IMR-90 (cell line): ENCODE measurements at regions of chr15 and their contacts with region 1.

Region 1: DNA sequence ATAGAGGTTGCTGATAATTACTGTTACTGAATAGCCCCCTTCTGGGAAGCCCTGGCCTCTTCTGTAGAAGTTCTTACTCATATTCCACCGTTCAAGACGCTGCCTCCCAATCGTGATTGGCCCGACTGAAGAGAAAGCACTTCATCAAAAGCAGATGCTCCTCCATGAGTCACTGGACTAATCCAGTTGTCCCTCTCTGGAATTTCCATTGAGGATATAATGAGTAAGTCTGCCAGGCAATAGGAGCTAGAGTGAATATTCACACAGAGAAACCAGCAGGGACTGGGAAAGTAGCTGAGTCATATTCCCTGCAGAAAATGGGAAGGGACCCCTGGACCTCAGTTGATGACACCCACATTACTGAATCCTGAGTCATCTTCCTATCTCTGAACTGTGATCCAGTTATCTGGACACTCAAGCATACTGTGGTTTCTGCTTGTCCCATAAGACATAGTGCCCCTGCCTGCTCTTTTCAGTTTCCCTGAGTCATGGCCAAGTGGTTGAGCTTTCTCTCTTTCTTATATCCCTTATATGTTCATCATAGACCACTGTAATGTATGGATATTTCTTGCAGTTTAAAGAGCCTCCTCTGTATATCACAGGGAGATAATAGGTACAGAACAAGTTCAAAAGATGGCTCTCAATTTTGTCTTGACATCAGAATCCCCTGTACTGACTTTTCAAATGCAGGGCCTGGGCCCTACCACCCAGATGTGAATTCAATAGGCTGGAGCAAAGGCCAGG is 151.2 kb upstream of the CDIN1 start:
- DNase-seq: peak; percentile 100
- ATAC-seq: peak; percentile 92
- H3K4me3 ChIP-seq: no peak overlapping the region
- H3K27ac ChIP-seq: peak overlapping the region; percentile 92
- H3K4me1 ChIP-seq: peaks cover 15% of the 10 kb centered on the region; the same call in 1 of the 2 replicates
- H3K27me3 ChIP-seq: no peaks in the 10 kb centered on the region
- CTCF ChIP-seq: no peak
- POLR2A ChIP-seq: no peak
- RAD21 ChIP-seq: peak; percentile 38; the same call in 1 of the 2 replicates

Region 2: GRCh38 chr15:35115155-35115725 is 1313.0 kb before region 1 on chr15:
- CTCF ChIA-PET with region 1: no interaction called
- POLR2A ChIA-PET with region 1: no interaction called
- dilution Hi-C with region 1: no loop called
- in situ Hi-C with region 1: no loop called
- intact Hi-C with region 1: no loop called
- DNase-seq: peak; percentile 16
- ATAC-seq: no peak
- H3K4me3 ChIP-seq: no peak overlapping the region
- H3K27ac ChIP-seq: no peak overlapping the region
- H3K4me1 ChIP-seq: no peaks in the 10 kb centered on the region
- H3K27me3 ChIP-seq: no peaks in the 10 kb centered on the region
- CTCF ChIP-seq: no peak
- POLR2A ChIP-seq: no peak
- RAD21 ChIP-seq: no peak

Region 3: DNA sequence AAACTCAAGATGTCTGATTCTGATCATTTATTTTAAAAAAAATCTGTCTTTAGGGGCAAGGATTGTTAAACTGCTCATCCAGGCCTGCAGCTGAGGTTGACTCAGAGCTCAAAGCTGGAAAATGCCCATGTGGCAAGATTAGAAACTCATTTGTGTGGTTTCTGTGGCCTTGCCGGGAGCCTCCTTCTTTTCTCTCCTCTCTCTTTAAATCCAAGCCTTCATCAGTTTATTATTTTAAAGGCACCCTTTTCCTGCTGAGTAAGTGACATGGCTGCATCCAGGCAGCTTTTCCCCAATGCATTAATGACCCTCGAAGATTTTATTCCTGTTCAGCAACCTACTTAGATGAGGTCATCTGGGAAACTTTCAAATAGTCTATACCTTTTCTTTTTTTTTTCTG is 70.2 kb before region 1 on chr15:
- CTCF ChIA-PET with region 1: no interaction called
- POLR2A ChIA-PET with region 1: no interaction called
- dilution Hi-C with region 1: no loop called
- in situ Hi-C with region 1: no loop called
- intact Hi-C with region 1: loop called (anchors 2 kb)
- DNase-seq: peak; percentile 95
- ATAC-seq: peak; percentile 55
- H3K4me3 ChIP-seq: no peak overlapping the region
- H3K27ac ChIP-seq: peak overlapping the region; percentile 93
- H3K4me1 ChIP-seq: peaks cover 16% of the 10 kb centered on the region
- H3K27me3 ChIP-seq: no peaks in the 10 kb centered on the region
- CTCF ChIP-seq: no peak
- POLR2A ChIP-seq: no peak
- RAD21 ChIP-seq: no peak

Region 4: GRCh38 chr15:36468746-36469145 is 40.5 kb after region 1 on chr15:
- CTCF ChIA-PET with region 1: no interaction called
- POLR2A ChIA-PET with region 1: interaction called, 3 read pairs
- dilution Hi-C with region 1: no loop called
- in situ Hi-C with region 1: loop called (anchors 5 kb)
- intact Hi-C with region 1: loop called (anchors 1 kb)
- DNase-seq: peak; percentile 100
- ATAC-seq: peak; percentile 92
- H3K4me3 ChIP-seq: no peak overlapping the region
- H3K27ac ChIP-seq: peak overlapping the region; percentile 33; the same call in 1 of the 2 replicates
- H3K4me1 ChIP-seq: peaks cover 2% of the 10 kb centered on the region; the same call in 1 of the 2 replicates
- H3K27me3 ChIP-seq: no peaks in the 10 kb centered on the region
- CTCF ChIP-seq: no peak
- POLR2A ChIP-seq: no peak
- RAD21 ChIP-seq: no peak